A549 (cell line): ENCODE measurements at regions of chr1 and their contacts with region 1.

Region 1: GRCh38 chr1:150281837-150282653 is at the start of gene CIART:
- DNase-seq: peak; percentile 93 to 97
- ATAC-seq: peak; percentile 96
- H3K4me3 ChIP-seq: peak within 1 kb of the TSS; percentile 52
- H3K27ac ChIP-seq: peak within 1 kb of the TSS; percentile 77 to 78
- H3K4me1 ChIP-seq: peaks cover 13% of the 10 kb centered on the region; the same call in 2 of the 3 replicates
- CTCF ChIP-seq: no peak
- EP300 ChIP-seq: no peak
- POLR2A ChIP-seq: peak; percentile 33
- RAD21 ChIP-seq: no peak
- polyA plus RNA-seq, gene CIART: 1.3 and 1.4 TPM in 2 replicates

Region 2: DNA sequence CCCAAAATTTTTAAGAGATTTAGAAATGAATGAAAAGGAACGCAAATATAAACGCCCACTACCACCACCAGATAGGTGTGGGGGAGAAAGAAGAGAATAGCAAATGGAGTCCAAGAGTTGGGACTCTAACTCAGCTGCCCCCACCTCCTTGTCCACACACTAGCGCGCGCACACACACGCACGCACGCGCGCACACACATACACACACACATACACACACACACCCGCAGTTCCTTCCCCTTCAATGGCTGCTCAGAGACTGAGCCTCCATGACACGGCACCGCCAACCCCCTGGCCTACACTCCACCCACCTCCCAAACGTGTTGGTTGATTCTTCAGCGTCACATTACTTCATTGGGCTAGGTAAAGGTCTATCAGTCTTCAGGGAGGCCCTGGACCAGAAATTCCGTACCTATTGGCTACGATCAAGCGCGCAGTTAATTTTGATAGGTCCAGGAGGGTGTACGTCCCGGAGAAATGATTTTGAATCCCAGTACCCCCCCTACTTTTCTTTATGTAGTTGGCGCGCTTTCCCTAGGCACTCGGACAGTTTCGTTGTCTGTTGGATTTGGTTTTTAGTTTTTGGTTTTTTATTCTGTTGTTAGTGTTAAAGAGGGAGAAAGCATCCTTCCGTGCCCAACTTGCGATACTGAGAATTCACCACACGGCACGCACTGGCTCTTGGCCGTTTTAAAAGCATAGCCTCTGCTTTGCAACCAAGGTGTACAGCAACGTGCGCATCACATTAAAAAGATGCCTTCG is 46.0 kb before region 1 on chr1 and contains the start of gene ANP32E:
- CTCF ChIA-PET with region 1: interaction called, 10 read pairs
- POLR2A ChIA-PET with region 1: interaction called, 8 read pairs
- DNase-seq: peak; percentile 99 to 100
- ATAC-seq: peak; percentile 91
- H3K4me3 ChIP-seq: peak within 1 kb of the TSS; percentile 77
- H3K27ac ChIP-seq: peak within 1 kb of the TSS; percentile 87 to 98
- H3K4me1 ChIP-seq: peaks cover 15% of the 10 kb centered on the region
- CTCF ChIP-seq: no peak; the same call in 1 of the 3 replicates
- EP300 ChIP-seq: no peak
- POLR2A ChIP-seq: peak; percentile 96
- RAD21 ChIP-seq: no peak
- polyA plus RNA-seq, gene ANP32E: 31.7 and 60.0 TPM in 2 replicates

Region 3: GRCh38 chr1:150262388-150263320 is 19.4 kb before region 1 on chr1:
- CTCF ChIA-PET with region 1: interaction called, 172 read pairs
- POLR2A ChIA-PET with region 1: no interaction called
- DNase-seq: no peak
- ATAC-seq: peak in 1 of 2 experiments; percentile 12; a peak in 2 of 6 replicates
- H3K4me3 ChIP-seq: no peak overlapping the region
- H3K27ac ChIP-seq: no peak overlapping the region
- H3K4me1 ChIP-seq: peaks cover 5% of the 10 kb centered on the region; the same call in 2 of the 3 replicates
- CTCF ChIP-seq: no peak
- EP300 ChIP-seq: no peak
- POLR2A ChIP-seq: no peak
- RAD21 ChIP-seq: no peak

Region 4: DNA sequence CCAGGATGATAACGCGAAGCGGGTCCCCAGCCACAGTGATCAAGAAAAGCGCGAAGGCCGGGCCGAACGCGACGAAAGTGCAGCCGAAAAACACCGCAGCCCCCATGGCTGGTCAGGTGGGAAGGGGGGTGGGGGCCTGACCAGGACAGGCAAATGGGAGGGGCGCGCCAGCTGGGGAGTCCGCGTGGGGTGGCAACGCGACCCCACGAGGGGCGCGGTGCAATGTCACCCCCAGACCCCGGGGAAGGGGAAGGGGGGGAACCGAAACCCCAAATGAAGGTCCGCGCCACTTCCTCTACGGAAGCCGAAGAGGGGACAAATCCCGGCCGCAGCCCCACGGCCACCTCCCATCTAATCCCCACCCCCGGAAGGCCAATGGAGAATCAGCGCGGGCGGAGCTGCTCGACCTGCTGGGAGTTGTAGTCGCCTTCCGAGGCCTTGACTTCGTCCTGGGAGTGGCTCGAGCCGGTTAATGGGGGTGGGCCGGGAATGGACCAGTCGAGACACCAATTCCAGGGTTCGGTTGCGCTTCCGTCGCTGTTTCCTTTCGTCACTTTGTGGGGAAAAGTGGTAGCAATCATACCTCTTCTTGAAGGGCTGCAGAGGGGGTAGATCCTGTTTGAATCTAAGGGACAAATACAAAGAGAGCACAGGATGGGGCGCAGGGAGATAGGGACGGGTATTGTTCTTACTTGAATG is 13.2 kb before region 1 on chr1 and contains the start of gene APH1A:
- CTCF ChIA-PET with region 1: interaction called, 48 read pairs
- POLR2A ChIA-PET with region 1: interaction called, 6 read pairs
- DNase-seq: peak; percentile 97 to 99
- ATAC-seq: peak; percentile 98 to 100
- H3K4me3 ChIP-seq: peak within 1 kb of the TSS; percentile 91
- H3K27ac ChIP-seq: peak within 1 kb of the TSS; percentile 94
- H3K4me1 ChIP-seq: peaks cover 11% of the 10 kb centered on the region
- CTCF ChIP-seq: no peak
- EP300 ChIP-seq: no peak
- POLR2A ChIP-seq: no peak
- RAD21 ChIP-seq: no peak
- polyA plus RNA-seq, gene APH1A: 118 and 119 TPM in 2 replicates